ENCODE measurements at regions of chr10 and their contacts with region 1.

Region 1: GRCh38 chr10:97498076-97498840 is at the start of gene MMS19:
- DNase-seq: peak; percentile 99
- H3K4me3 ChIP-seq: peak within 1 kb of the TSS; percentile 87 to 98 (median 93)
- H3K27ac ChIP-seq: peak within 1 kb of the TSS; percentile 94
- H3K4me1 ChIP-seq: peaks cover 33% of the 10 kb centered on the region
- H3K27me3 ChIP-seq: no peaks in the 10 kb centered on the region
- CTCF ChIP-seq: no peak
- total RNA-seq, gene MMS19: 69.7 to 74.2 TPM

Region 2: DNA sequence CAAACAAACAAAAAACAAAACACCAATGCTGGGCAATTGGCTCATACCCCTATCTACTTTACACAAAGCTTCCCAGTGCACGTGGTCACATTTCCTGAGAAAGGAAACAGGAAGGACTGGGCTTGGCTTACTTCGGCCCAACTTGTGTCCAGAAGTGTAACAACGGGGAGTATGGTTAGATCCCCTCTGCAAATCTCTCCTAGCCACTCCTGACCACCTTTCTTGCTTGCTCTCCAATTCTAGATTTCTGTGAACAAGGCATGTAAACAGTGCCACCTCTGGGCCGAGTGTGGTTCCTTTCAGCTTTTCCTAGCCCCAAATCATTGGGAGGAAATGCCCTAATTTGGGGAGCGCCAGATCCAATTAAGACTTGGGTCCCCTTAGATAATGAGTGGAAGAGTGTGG is 142.7 kb before region 1 on chr10:
- CTCF ChIA-PET with region 1: no interaction called
- dilution Hi-C with region 1: no loop called
- in situ Hi-C with region 1: no loop called
- intact Hi-C with region 1: no loop called
- DNase-seq: no peak
- H3K4me3 ChIP-seq: no peak overlapping the region
- H3K27ac ChIP-seq: no peak overlapping the region
- H3K4me1 ChIP-seq: no peaks in the 10 kb centered on the region
- H3K27me3 ChIP-seq: no peaks in the 10 kb centered on the region
- CTCF ChIP-seq: peak in 1 of 2 donors; percentile 38

Region 3: DNA sequence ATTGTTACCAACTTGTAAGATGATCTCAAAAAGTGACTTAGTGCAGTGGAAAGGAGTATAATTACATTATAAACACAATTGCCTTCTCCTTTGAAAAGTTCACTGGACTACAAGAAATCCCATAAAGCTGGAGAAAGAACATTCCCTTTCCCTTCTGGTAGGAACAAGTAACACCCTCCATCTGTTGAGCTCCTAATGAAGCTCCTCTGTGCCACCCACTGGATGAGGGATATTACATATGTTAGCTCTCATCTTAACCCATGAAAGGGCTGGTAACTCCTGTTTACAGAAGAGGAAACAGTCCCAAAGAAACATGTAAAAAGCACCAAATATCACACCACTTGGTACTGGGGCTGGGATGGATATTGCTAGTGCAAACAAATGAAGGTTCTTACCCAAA is 64.2 kb before region 1 on chr10:
- CTCF ChIA-PET with region 1: no interaction called
- dilution Hi-C with region 1: loop called (anchors 5 kb)
- in situ Hi-C with region 1: no loop called
- intact Hi-C with region 1: no loop called
- DNase-seq: no peak
- H3K4me3 ChIP-seq: no peak overlapping the region
- H3K27ac ChIP-seq: no peak overlapping the region
- H3K4me1 ChIP-seq: no peaks in the 10 kb centered on the region
- H3K27me3 ChIP-seq: no peaks in the 10 kb centered on the region
- CTCF ChIP-seq: peak in 1 of 2 donors; percentile 7

Region 4: DNA sequence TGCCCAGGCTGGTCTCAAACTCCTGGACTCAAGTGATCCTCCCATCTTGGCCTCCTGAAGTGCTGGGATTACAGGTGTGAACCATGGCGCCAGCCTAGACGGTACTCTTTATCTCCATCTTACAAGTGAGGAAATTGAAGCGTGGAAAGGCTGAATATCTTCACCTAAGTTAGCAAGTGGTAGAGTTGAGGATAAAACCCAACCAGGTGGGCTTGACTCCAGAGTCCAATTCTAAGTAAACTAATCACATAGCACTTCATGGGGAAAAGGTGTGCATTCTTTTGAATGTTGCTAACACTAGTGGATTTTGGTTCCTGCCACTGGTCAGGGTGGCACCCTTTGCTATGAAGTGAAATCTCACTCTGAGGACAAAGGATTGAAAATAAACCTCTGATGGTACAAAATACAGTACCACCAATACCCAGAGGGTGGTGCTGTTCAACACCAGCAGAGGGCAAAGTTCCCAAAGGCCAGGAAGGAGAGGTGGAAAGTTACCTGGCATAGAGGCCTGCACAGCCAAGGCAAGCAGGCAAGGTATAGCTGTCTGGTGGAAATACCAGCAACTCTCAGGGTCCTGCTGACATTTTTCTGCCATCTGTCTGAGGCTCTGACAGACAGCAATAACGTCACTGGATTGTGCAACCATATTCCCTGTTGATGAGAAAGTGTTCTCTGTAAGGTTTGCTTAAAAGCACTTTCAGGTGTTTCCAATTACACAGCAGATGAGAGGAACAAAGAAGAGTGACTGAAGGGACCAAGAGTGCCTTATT is 34.7 kb before region 1 on chr10:
- CTCF ChIA-PET with region 1: interaction called, 5 read pairs
- dilution Hi-C with region 1: no loop called
- in situ Hi-C with region 1: no loop called
- intact Hi-C with region 1: loop called (anchors 1 kb)
- DNase-seq: peak; percentile 65
- H3K4me3 ChIP-seq: no peak overlapping the region
- H3K27ac ChIP-seq: no peak overlapping the region
- H3K4me1 ChIP-seq: peaks cover 26% of the 10 kb centered on the region
- H3K27me3 ChIP-seq: no peaks in the 10 kb centered on the region
- CTCF ChIP-seq: peak; percentile 90 to 91

Region 5: DNA sequence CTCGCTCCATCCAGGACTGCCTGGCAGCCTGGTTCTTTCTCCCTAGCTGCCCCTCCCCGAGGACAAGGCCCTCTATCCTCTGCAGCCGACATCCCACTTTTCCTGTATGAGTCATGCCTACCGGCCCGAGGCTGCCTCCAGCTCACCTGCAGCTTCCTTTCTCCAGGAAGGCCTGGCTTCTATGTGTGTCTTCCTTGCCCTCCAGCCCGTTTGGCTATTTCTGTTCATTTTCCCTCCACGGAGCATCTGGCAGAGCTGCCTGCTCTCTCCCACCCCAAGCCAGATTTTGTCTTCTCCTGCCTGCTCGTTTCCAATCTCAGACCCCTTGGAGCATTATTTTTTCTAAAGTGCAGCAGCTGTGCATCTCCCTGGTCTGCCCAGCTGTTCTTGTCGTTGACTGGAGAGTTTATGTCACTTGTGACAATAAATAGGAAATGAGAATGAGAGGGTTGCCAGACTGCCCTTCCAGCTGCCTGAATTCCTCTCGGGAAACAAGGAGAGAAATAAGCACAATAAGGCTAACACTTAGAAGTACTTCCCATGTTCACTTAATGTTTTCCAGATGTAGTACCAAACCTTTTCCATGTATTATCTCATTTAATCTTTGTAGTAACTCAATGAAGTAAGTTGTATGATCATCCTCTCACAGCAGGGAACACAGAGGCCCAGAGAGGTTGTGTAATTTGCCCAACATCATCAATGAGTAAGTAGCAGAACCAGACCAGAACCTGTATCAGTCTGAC is 20.2 kb after region 1 on chr10:
- CTCF ChIA-PET with region 1: no interaction called
- dilution Hi-C with region 1: no loop called
- in situ Hi-C with region 1: no loop called
- intact Hi-C with region 1: loop called (anchors 1 kb)
- DNase-seq: peak; percentile 71
- H3K4me3 ChIP-seq: no peak overlapping the region
- H3K27ac ChIP-seq: no peak overlapping the region
- H3K4me1 ChIP-seq: peaks cover 26% of the 10 kb centered on the region
- H3K27me3 ChIP-seq: no peaks in the 10 kb centered on the region
- CTCF ChIP-seq: no peak

Region 6: DNA sequence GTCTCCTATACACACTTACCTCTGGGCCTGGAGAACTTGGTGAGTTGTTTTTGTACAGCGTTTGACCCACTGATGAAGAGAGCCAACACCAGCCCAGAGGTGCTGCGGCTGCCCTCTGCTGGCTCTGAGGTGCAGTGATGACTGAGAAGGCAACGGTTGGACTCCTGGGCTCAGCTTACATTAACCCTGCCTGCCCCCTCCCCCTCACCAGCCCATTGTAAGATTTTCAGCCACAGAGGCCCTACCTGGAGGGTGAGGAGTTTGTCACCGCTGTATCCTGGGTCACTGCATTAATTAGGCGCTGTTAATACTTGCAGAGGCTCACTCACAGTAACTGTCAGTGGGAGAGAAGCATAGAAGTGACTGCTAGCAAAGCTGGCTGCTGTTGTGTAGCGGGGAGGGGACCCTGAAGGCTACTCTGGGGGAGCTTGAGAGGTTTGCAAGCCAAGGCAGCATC is 55.3 kb after region 1 on chr10:
- CTCF ChIA-PET with region 1: interaction called, 6 read pairs
- dilution Hi-C with region 1: no loop called
- in situ Hi-C with region 1: no loop called
- intact Hi-C with region 1: loop called (anchors 1 kb)
- DNase-seq: peak; percentile 56
- H3K4me3 ChIP-seq: no peak overlapping the region
- H3K27ac ChIP-seq: no peak overlapping the region
- H3K4me1 ChIP-seq: peaks cover 35% of the 10 kb centered on the region
- H3K27me3 ChIP-seq: no peaks in the 10 kb centered on the region
- CTCF ChIP-seq: peak; percentile 89 to 98

Measured in mammary epithelial cell (primary cell).